Aorta (tissue), 5 donors: ENCODE measurements at regions of chr1 and their contacts with region 1.

Region 1: GRCh38 chr1:75502776-75503175 is 108.1 kb downstream of the SLC44A5 start:
- DNase-seq: no peak
- ATAC-seq: no peak
- H3K4me3 ChIP-seq: no peak overlapping the region
- H3K27ac ChIP-seq: no peak overlapping the region
- H3K4me1 ChIP-seq: no peaks in the 10 kb centered on the region
- H3K27me3 ChIP-seq: no peaks in the 10 kb centered on the region

Region 2: DNA sequence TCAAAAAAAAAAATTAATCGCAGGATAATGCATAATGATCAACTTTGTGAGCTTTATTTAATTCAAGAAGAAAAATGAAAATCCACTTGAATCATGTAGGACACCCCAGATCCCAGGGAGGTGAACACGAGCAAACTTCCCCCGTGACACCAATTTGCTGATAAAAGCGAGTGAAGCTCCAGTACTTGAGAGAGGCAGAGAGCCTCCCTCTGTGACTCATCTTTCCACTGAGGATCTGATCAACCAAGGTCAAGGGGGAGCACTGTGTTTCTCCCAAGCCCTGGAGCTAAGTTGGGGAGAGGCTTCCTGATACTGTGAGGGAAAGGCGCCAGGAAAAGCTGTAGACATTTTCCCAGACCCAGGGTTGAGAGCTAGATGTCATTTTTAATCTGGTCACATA is 52.8 kb before region 1 on chr1:
- intact Hi-C with region 1: loop called in 1 of 2 experiments (anchors 5 kb)
- DNase-seq: no peak
- ATAC-seq: no peak
- H3K4me3 ChIP-seq: no peak overlapping the region
- H3K27ac ChIP-seq: no peak overlapping the region
- H3K4me1 ChIP-seq: no peaks in the 10 kb centered on the region
- H3K27me3 ChIP-seq: no peaks in the 10 kb centered on the region

Region 3: DNA sequence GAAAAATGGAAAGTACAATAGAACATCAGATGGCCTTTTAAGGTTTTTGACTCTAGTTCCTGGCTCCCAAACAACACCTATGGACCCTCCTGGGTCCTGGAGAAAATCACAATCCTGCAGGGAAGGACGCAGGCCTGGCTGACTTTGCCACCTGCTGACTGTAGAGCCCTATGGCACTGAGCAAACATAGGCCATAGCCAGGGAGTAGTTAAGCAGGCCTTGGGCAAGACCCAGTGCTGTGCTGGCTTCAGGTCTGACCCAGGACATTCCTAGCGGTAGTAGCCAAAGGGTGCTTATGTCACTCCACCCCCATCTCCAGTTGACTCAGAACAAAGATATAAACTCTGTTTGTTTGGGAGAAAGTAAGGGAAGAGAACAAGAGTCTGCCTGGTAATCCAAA is 40.9 kb before region 1 on chr1:
- intact Hi-C with region 1: no loop called
- DNase-seq: no peak
- ATAC-seq: no peak
- H3K4me3 ChIP-seq: no peak overlapping the region
- H3K27ac ChIP-seq: no peak overlapping the region
- H3K4me1 ChIP-seq: no peaks in the 10 kb centered on the region
- H3K27me3 ChIP-seq: no peaks in the 10 kb centered on the region